Caco-2 (cell line): ENCODE measurements at regions of chr2 and their contacts with region 1.

Region 1: DNA sequence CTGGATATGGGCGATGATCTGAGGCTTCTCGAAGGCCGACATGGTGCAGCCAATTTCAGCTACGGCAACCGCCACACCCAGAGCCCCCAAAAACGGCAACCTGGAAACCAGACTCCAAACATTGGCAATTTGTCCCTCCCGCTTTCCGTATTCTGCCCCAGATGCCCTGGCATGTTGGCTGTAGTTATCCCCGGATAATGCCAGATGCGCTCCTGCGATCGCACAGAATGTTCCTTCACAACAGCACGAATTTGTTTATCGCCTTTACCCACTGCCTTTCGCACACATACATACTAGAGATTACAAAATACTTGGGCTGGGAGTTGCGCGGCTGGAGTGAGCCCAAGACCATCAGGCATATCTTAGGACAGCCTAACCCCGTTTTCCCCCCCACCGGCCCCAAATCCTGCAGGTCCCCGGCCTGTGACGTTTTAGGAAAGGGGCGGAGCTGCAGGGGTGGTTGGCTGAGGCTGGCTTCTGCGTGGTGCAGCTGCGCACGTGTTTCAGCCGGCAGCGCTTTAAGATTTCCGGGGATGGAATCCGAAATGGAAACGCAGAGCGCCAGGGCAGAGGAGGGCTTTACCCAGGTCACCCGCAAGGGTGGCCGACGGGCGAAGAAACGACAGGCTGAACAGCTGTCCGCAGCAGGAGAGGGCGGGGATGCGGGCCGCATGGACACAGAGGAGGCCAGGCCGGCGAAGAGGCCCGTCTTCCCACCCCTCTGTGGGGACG is at the start of gene PNO1:
- DNase-seq: peak; percentile 97
- H3K4me3 ChIP-seq: peak within 1 kb of the TSS; percentile 76
- H3K4me3 Mint-ChIP-seq: peak within 1 kb of the TSS; percentile 100
- H3K27ac Mint-ChIP-seq: peak within 1 kb of the TSS; percentile 100
- H3K4me1 ChIP-seq: peaks cover 3% of the 10 kb centered on the region; the same call in 1 of the 2 replicates
- H3K4me1 Mint-ChIP-seq: peaks cover 7% of the 10 kb centered on the region
- H3K27me3 ChIP-seq: no peaks in the 10 kb centered on the region
- H3K27me3 Mint-ChIP-seq: no peaks in the 10 kb centered on the region
- CTCF ChIP-seq: no peak
- total RNA-seq, gene PNO1: 33.3 and 37.0 TPM in 2 replicates

Region 2: DNA sequence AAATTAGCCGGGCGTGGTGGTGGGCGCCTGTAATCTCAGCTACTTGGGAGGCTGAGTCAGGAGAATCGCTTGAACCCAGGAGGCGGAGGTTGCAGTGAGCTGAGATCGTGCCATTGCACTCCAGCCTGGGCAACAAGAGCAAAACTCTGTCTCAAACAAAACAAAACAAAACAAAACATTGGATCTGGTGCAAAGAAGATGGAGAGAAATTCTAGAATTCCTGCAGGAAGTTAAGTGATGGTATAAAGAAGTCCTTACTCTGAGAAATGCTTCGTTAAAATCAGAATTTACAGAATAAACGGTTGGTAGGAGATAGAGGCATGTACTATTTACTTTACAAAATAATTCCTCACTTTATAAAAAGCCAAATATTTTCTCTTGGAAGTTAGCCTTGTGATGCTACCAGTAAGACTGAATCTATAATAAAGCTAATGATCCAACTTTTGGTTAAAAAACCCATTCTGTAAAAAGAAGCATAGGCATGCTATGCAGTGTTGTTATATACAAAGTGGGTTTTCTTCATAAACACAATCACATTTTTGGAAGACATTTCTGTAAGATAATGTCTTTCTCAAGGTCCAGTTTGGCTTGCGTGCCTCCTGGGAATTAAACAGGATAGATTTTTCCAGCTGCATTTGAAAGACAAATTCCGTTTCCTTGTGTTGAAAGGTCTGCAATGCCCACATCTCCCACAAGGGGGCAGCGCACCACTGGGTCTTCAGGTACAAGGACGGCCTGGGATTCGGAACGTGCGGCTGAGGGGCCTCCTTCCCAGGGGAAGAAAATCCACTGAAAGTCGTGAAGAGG is 35.5 kb before region 1 on chr2:
- CTCF ChIA-PET with region 1: no interaction called
- POLR2A ChIA-PET with region 1: no interaction called
- intact Hi-C with region 1: loop called (anchors 1 kb)
- DNase-seq: peak; percentile 87 to 89
- H3K4me3 ChIP-seq: no peak overlapping the region
- H3K4me3 Mint-ChIP-seq: peak overlapping the region; percentile 34
- H3K27ac Mint-ChIP-seq: no peak overlapping the region
- H3K4me1 ChIP-seq: peaks cover 12% of the 10 kb centered on the region
- H3K4me1 Mint-ChIP-seq: peaks cover 10% of the 10 kb centered on the region
- H3K27me3 ChIP-seq: no peaks in the 10 kb centered on the region
- H3K27me3 Mint-ChIP-seq: no peaks in the 10 kb centered on the region
- CTCF ChIP-seq: peak; percentile 96

Region 3: GRCh38 chr2:68190991-68191731 is 33.6 kb after region 1 on chr2:
- CTCF ChIA-PET with region 1: no interaction called
- POLR2A ChIA-PET with region 1: no interaction called
- intact Hi-C with region 1: loop called (anchors 2 kb)
- DNase-seq: no peak
- H3K4me3 ChIP-seq: no peak overlapping the region
- H3K4me3 Mint-ChIP-seq: no peak overlapping the region
- H3K27ac Mint-ChIP-seq: no peak overlapping the region
- H3K4me1 ChIP-seq: no peaks in the 10 kb centered on the region
- H3K4me1 Mint-ChIP-seq: peaks cover 17% of the 10 kb centered on the region
- H3K27me3 ChIP-seq: no peaks in the 10 kb centered on the region
- H3K27me3 Mint-ChIP-seq: no peaks in the 10 kb centered on the region
- CTCF ChIP-seq: no peak

Region 4: DNA sequence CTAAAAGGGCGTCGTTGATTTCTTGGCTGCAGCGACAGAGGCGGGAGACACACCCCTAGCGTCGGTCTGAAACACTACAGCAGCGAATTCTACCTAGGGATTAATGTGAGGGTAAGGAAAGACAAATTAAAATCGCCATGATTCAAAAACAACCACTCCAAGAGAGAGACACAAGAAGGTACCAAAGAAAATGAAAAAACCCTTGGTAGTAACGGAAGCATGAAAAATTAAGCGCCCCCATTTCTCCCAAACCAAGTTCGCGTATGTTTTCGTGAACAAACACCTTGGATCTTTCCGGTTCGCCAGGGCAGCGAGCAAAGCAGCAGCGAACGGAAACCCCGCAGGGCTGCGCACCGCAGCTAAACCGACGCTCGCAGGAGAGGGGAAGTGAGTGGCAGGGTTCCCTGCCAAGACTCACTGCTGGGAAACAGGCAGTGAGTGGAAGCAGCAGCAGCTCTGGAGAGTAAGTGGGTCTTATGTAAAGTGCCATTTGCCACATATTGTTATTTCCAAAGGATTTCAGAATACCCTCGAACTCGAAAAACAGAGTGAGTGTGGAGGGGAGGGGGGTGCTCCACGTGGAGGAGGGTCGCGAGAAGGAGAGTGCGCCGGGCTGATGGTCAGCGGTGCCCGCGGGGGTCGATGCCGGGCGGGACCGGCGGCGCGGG is 93.8 kb after region 1 on chr2:
- CTCF ChIA-PET with region 1: no interaction called
- POLR2A ChIA-PET with region 1: interaction called, 6 read pairs
- intact Hi-C with region 1: loop called (anchors 1 kb)
- DNase-seq: peak; percentile 79 to 80
- H3K4me3 ChIP-seq: peak overlapping the region; percentile 99
- H3K4me3 Mint-ChIP-seq: peak overlapping the region; percentile 92
- H3K27ac Mint-ChIP-seq: peak overlapping the region; percentile 97
- H3K4me1 ChIP-seq: 0 out of 2 replicates have a peak, but pooled peaks cover 17% of the 10 kb centered on the region
- H3K4me1 Mint-ChIP-seq: peaks cover 14% of the 10 kb centered on the region
- H3K27me3 ChIP-seq: no peaks in the 10 kb centered on the region
- H3K27me3 Mint-ChIP-seq: no peaks in the 10 kb centered on the region
- CTCF ChIP-seq: peak; percentile 64 to 72